MCF 10A (cell line): ENCODE measurements at regions of chr9 and their contacts with region 1.

Region 1: DNA sequence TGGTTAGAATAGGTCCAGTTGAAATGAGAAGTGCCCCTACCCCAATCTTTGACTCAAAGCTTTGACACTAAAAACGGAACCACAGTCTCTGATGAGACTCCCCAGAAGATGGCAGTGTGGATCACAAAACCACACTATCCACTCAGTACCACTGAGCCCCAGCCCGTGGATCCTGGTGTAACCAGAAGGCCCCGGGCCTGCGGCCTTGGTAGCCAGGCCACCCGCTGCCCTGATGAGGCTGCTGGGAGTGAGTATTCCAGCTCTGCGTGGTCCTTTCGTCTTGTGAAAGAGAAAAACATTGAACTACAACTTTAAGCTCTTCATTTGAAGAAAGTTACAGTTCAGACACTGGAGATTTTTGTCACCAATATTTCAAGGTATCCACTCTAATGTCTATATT is 42.2 kb upstream of the FBP1 start:
- DNase-seq: peak; percentile 76
- H3K4me3 Mint-ChIP-seq: no peak overlapping the region
- H3K27ac Mint-ChIP-seq: no peak overlapping the region
- H3K4me1 Mint-ChIP-seq: no peaks in the 10 kb centered on the region
- H3K27me3 Mint-ChIP-seq: no peaks in the 10 kb centered on the region
- CTCF ChIP-seq: peak; percentile 81

Region 2: GRCh38 chr9:94692601-94693000 is 11.1 kb after region 1 on chr9:
- CTCF ChIA-PET with region 1: interaction called, 24 read pairs
- POLR2A ChIA-PET with region 1: interaction called, 4 read pairs
- intact Hi-C with region 1: no loop called
- DNase-seq: no peak
- H3K4me3 Mint-ChIP-seq: no peak overlapping the region
- H3K27ac Mint-ChIP-seq: no peak overlapping the region
- H3K4me1 Mint-ChIP-seq: no peaks in the 10 kb centered on the region
- H3K27me3 Mint-ChIP-seq: peaks cover 29% of the 10 kb centered on the region
- CTCF ChIP-seq: no peak

Region 3: GRCh38 chr9:95143591-95144561 is 462.4 kb after region 1 on chr9:
- CTCF ChIA-PET with region 1: interaction called, 12 read pairs
- POLR2A ChIA-PET with region 1: no interaction called
- intact Hi-C with region 1: no loop called
- DNase-seq: no peak
- H3K4me3 Mint-ChIP-seq: no peak overlapping the region
- H3K27ac Mint-ChIP-seq: no peak overlapping the region
- H3K4me1 Mint-ChIP-seq: no peaks in the 10 kb centered on the region
- H3K27me3 Mint-ChIP-seq: no peaks in the 10 kb centered on the region
- CTCF ChIP-seq: no peak

Region 4: DNA sequence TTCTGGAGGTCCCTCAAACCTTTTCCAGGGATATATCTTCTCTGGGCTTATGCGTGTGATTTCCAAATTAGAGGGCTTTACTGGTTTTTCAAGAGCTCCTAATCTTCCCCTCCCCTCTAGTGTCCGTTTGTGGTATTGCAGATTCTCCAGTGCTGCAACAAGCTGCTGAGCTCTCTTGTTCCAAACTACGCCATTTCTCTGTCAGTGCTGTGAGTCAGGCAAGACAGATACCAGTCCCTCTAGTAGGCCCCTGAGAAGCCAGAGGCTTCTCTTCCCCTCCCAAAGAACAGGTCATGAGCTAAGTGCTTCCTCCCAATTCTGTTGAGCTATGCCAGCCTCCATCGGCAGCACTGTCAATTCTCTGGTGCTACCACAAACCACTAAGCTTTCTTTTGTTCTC is 486.5 kb after region 1 on chr9:
- CTCF ChIA-PET with region 1: interaction called, 43 read pairs
- POLR2A ChIA-PET with region 1: interaction called, 7 read pairs
- intact Hi-C with region 1: loop called (anchors 1 kb)
- DNase-seq: peak; percentile 89
- H3K4me3 Mint-ChIP-seq: no peak overlapping the region
- H3K27ac Mint-ChIP-seq: no peak overlapping the region
- H3K4me1 Mint-ChIP-seq: peaks cover 13% of the 10 kb centered on the region
- H3K27me3 Mint-ChIP-seq: no peaks in the 10 kb centered on the region
- CTCF ChIP-seq: peak; percentile 93

Region 5: GRCh38 chr9:96217754-96218693 is 1536.5 kb after region 1 on chr9:
- CTCF ChIA-PET with region 1: interaction called, 4 read pairs
- POLR2A ChIA-PET with region 1: no interaction called
- intact Hi-C with region 1: loop called (anchors 5 kb)
- DNase-seq: peak; percentile 64
- H3K4me3 Mint-ChIP-seq: peak overlapping the region; percentile 38
- H3K27ac Mint-ChIP-seq: no peak overlapping the region
- H3K4me1 Mint-ChIP-seq: peaks cover 4% of the 10 kb centered on the region
- H3K27me3 Mint-ChIP-seq: peaks cover 63% of the 10 kb centered on the region
- CTCF ChIP-seq: peak; percentile 98